ENCODE measurements at regions of chr10 and their contacts with region 1.

Region 1: DNA sequence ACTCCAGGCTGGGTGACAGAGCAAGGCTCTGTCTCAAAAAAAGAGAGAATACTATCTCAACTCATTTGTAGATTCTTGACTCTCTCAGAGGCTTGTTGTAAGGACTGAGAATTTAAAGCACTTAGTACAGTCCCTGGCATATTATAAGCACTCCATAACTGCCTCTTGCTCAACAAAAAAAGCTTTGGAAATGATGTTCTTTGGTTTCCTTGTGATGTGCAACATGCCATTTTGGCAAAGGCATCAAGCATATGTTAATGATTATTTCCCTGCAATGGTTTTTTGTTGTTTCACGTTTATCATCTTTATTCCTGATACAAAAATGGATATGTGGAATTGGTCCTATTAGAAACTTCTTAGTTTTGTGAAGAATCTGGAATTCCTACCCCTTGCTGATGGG is 15.7 kb downstream of the NOLC1 start:
- DNase-seq: no peak
- H3K4me3 ChIP-seq: no peak overlapping the region
- H3K27ac ChIP-seq: no peak overlapping the region
- H3K27me3 ChIP-seq: no peaks in the 10 kb centered on the region
- CTCF ChIP-seq: no peak

Region 2: DNA sequence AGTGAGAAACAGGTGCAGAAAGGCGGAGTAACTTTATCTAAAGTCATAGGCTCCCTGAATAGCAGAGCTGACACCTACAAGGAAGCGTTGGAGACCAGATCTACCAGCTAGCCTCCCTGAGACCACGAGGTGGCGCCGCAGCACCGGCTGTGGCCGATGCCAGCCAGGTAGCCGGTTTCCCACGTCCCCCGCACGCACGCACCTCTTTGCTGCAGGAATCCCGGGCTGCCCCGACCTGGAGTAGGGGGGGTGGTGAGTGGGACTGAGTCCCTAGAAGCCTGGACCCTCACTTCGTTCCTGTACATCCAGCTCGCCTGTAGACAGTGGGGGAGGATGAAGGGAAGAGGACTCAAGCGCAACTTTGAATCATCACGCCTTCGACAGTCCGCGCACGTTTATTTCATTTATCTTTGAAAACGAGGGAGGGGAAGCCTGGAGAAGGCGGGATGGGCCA is 62.0 kb after region 1 on chr10:
- intact Hi-C with region 1: loop called in 1 of 2 experiments (anchors 5 kb)
- DNase-seq: peak; percentile 69 to 88 (median 80)
- H3K4me3 ChIP-seq: peak overlapping the region in 58 of 59 donors; percentile 12 to 62 (median 44)
- H3K27ac ChIP-seq: no peak overlapping the region
- H3K27me3 ChIP-seq: peaks cover 0 to 53% (median 28%) of the 10 kb centered on the region in 45 donors
- CTCF ChIP-seq: peak; percentile 60 to 98 (median 92)

Region 3: DNA sequence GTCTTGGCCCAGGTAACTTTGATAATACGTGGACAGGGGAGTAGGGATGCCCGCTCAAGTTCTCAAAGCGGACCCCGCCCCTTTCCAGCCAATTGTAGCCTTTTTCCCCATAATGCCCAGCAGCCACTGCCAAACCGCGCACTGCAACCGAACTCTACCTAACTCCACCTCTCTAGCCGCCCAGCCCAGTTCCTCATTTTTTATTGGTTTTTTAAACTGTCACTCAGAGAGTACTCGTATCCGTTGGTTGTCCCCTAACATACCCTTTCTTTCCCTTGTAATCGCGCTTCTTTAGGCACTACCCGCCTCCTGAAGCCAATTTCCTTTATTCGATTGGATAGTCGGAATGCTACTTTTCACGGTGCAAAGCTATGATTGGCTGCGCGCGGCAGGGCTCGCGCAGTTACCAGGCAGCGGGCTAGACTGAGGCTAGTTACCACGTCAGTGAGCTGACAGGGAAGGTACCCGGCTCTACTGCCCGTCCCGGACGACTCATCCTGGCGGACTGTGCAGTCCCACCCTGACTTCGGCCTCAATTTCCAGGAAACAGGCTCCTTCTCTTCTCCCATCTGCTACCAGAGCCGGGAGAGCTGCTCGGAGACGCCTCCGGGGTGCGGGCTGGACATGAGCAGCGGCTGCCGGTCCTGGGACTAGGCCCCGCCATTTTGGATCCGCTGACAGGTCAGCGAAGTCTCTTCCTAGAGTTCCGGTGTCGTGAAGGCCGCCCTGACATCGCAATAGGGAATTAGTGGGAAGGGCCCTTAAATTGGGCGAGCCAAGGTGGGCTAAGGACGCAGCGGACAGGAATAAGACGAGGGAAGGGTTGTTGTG is 77.5 kb after region 1 on chr10 and contains the start of gene GBF1:
- intact Hi-C with region 1: no loop called
- DNase-seq: peak; percentile 88 to 97 (median 94)
- H3K4me3 ChIP-seq: peak within 1 kb of the TSS; percentile 68 to 100 (median 92)
- H3K27ac ChIP-seq: peak within 1 kb of the TSS in 58 of 59 donors; percentile 23 to 95 (median 81)
- H3K27me3 ChIP-seq: peaks cover 0 to 12% (median 0%) of the 10 kb centered on the region in 45 donors
- CTCF ChIP-seq: peak in 15 of 56 donors; percentile 7 to 48 (median 29)
- total RNA-seq, gene GBF1: 42.4 to 69.4 (median 57.9) TPM

Region 4: GRCh38 chr10:102352066-102352715 is 184.3 kb after region 1 on chr10:
- intact Hi-C with region 1: loop called (anchors 5 to 10 kb)
- DNase-seq: peak in 6 of 10 donors; percentile 21 to 65 (median 43)
- H3K4me3 ChIP-seq: no peak overlapping the region
- H3K27ac ChIP-seq: no peak overlapping the region
- H3K27me3 ChIP-seq: no peaks in the 10 kb centered on the region
- CTCF ChIP-seq: peak; percentile 79 to 96 (median 91)

Region 5: GRCh38 chr10:102399217-102400089 is 231.6 kb after region 1 on chr10:
- intact Hi-C with region 1: loop called in 1 of 2 experiments (anchors 5 kb)
- DNase-seq: peak; percentile 84 to 94 (median 88)
- H3K4me3 ChIP-seq: peak overlapping the region; percentile 56 to 96 (median 77)
- H3K27ac ChIP-seq: peak overlapping the region; percentile 35 to 96 (median 89)
- H3K27me3 ChIP-seq: peaks cover 0 to 2% (median 0%) of the 10 kb centered on the region in 45 donors
- CTCF ChIP-seq: peak; percentile 82 to 100 (median 97)

Region 6: DNA sequence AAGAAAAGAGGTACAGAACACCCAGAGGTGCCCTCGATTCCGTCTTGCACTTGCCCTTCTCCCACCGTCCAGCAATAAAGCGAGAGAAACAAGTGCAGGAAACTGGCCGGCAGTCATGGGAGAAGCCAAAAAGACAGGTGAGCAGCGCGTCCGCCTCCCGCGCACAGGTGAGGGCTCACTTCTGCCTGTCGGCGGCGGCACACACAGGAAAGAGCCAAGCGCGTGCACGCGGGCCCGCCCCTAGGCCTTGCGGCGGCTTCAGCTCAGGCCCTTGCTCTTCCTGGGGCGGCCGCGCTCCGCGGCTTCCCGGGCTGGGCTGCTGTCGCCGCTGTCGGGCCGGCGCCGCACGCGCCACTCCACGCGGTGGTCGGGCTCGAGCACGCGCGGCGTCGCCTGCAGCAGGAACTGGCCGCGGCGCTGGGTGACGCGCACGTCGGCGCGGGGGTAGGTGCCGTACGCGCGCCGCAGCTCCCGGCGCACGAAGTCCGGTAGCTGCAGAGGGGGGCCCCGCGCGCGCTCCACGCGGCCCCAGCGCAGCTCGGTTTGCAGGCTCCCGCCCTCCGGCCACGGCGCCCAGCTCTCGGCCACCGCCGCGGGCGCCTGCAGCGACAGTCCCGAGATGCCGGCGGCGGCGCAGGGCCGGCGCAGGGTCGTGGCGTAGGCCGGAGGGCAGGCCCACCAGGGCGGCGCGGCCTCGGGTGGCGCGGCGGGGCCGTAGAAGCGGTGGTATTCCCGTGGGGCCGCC is 282.5 kb after region 1 on chr10:
- intact Hi-C with region 1: no loop called
- DNase-seq: peak; percentile 50 to 91 (median 80)
- H3K4me3 ChIP-seq: peak overlapping the region; percentile 65 to 96 (median 85)
- H3K27ac ChIP-seq: peak overlapping the region in 58 of 59 donors; percentile 31 to 96 (median 84)
- H3K27me3 ChIP-seq: no peaks in the 10 kb centered on the region
- CTCF ChIP-seq: peak in 10 of 56 donors; percentile 7 to 34 (median 20)

Region 7: GRCh38 chr10:102476466-102477141 is 308.7 kb after region 1 on chr10:
- intact Hi-C with region 1: loop called in 1 of 2 experiments (anchors 10 kb)
- DNase-seq: peak in 1 of 10 donors; percentile 18
- H3K4me3 ChIP-seq: no peak overlapping the region
- H3K27ac ChIP-seq: peak overlapping the region in 24 of 59 donors; percentile 8 to 68 (median 30)
- H3K27me3 ChIP-seq: no peaks in the 10 kb centered on the region
- CTCF ChIP-seq: no peak

Measured in dorsolateral prefrontal cortex (tissue), 120 donors.